Ovary (tissue), 10 donors: ENCODE measurements at regions of chr5 and their contacts with region 1.

Region 1: GRCh38 chr5:78467752-78468357 is 107.4 kb downstream of the SCAMP1 start:
- DNase-seq: no peak
- H3K4me3 ChIP-seq: no peak overlapping the region
- H3K27ac ChIP-seq: no peak overlapping the region
- H3K4me1 ChIP-seq: no peaks in the 10 kb centered on the region
- H3K27me3 ChIP-seq: no peaks in the 10 kb centered on the region
- CTCF ChIP-seq: peak; percentile 46 to 67 (median 57)
- EP300 ChIP-seq: no peak
- POLR2A ChIP-seq: no peak

Region 2: GRCh38 chr5:78328585-78329173 is 139.2 kb before region 1 on chr5:
- intact Hi-C with region 1: no loop called
- DNase-seq: no peak
- H3K4me3 ChIP-seq: no peak overlapping the region
- H3K27ac ChIP-seq: no peak overlapping the region
- H3K4me1 ChIP-seq: no peaks in the 10 kb centered on the region
- H3K27me3 ChIP-seq: no peaks in the 10 kb centered on the region
- CTCF ChIP-seq: no peak
- EP300 ChIP-seq: no peak
- POLR2A ChIP-seq: no peak

Region 3: GRCh38 chr5:78964887-78965286 is 497.0 kb after region 1 on chr5:
- intact Hi-C with region 1: loop called in 2 of 4 experiments (anchors 10 kb)
- DNase-seq: no peak
- H3K4me3 ChIP-seq: no peak overlapping the region
- H3K27ac ChIP-seq: no peak overlapping the region
- H3K4me1 ChIP-seq: no peaks in the 10 kb centered on the region
- H3K27me3 ChIP-seq: no peaks in the 10 kb centered on the region
- CTCF ChIP-seq: peak; percentile 27 to 80 (median 58)
- EP300 ChIP-seq: no peak
- POLR2A ChIP-seq: no peak